Left cardiac atrium (tissue), 4 donors: ENCODE measurements at regions of chr20 and their contacts with region 1.

Region 1: GRCh38 chr20:23257848-23258746 is 92.5 kb upstream of the NXT1 start:
- DNase-seq: peak; percentile 40
- ATAC-seq: peak; percentile 88 to 89

Region 2: GRCh38 chr20:23331450-23332350 is 73.6 kb after region 1 on chr20:
- intact Hi-C with region 1: loop called in 1 of 2 experiments (anchors 10 kb)
- DNase-seq: no peak
- ATAC-seq: peak in 1 of 2 donors; percentile 30